ENCODE measurements at regions of chr2 and their contacts with region 1.

Region 1: DNA sequence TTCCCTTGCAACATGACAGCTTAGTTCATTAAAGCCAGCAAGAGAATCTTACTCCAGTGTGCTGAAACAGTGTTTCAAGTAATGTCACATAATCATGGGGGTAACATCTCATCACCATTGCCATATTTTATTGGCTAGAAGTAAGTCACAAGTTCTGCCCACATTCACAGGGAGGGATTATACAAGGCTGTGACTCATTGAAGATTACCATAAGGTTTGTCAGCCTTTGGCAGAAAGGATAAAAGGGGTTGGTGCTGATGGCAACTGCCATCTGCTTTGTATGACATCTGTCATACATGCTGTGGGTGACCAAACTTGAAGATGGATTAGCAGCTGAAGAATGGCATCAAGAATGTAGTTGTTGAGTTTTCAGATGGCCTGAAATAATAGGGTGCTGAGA is 61.2 kb downstream of the KCNE4 start:
- DNase-seq: peak; percentile 14
- H3K4me3 ChIP-seq: no peak overlapping the region
- H3K27ac ChIP-seq: no peak overlapping the region
- H3K4me1 ChIP-seq: peaks cover 18% of the 10 kb centered on the region
- H3K27me3 ChIP-seq: no peaks in the 10 kb centered on the region
- CTCF ChIP-seq: no peak
- POLR2A ChIP-seq: no peak

Region 2: GRCh38 chr2:222364285-222364895 is 748.8 kb before region 1 on chr2:
- CTCF ChIA-PET with region 1: no interaction called
- POLR2A ChIA-PET with region 1: no interaction called
- dilution Hi-C with region 1: no loop called
- intact Hi-C with region 1: loop called (anchors 1 kb)
- DNase-seq: peak; percentile 93
- H3K4me3 ChIP-seq: peak overlapping the region in 1 of 3 experiments; percentile 33
- H3K27ac ChIP-seq: peak overlapping the region; percentile 99
- H3K4me1 ChIP-seq: peaks cover 20% of the 10 kb centered on the region
- H3K27me3 ChIP-seq: no peaks in the 10 kb centered on the region
- CTCF ChIP-seq: no peak
- POLR2A ChIP-seq: no peak

Region 3: GRCh38 chr2:223041527-223042109 is 71.5 kb before region 1 on chr2:
- CTCF ChIA-PET with region 1: no interaction called
- POLR2A ChIA-PET with region 1: no interaction called
- dilution Hi-C with region 1: no loop called
- intact Hi-C with region 1: loop called (anchors 5 kb)
- DNase-seq: peak; percentile 92
- H3K4me3 ChIP-seq: no peak overlapping the region
- H3K27ac ChIP-seq: no peak overlapping the region
- H3K4me1 ChIP-seq: peaks cover 14% of the 10 kb centered on the region
- H3K27me3 ChIP-seq: no peaks in the 10 kb centered on the region
- CTCF ChIP-seq: no peak
- POLR2A ChIP-seq: no peak

Region 4: GRCh38 chr2:223101340-223102039 is 11.7 kb before region 1 on chr2:
- CTCF ChIA-PET with region 1: interaction called, 18 read pairs
- POLR2A ChIA-PET with region 1: no interaction called
- dilution Hi-C with region 1: no loop called
- intact Hi-C with region 1: no loop called
- DNase-seq: peak; percentile 51
- H3K4me3 ChIP-seq: no peak overlapping the region
- H3K27ac ChIP-seq: no peak overlapping the region
- H3K4me1 ChIP-seq: no peaks in the 10 kb centered on the region
- H3K27me3 ChIP-seq: no peaks in the 10 kb centered on the region
- CTCF ChIP-seq: peak; percentile 24 to 52
- POLR2A ChIP-seq: no peak